Ovary (tissue), 10 donors: ENCODE measurements at regions of chr3 and their contacts with region 1.

Region 1: GRCh38 chr3:194592798-194593752 is 40.1 kb downstream of the TMEM44 start:
- DNase-seq: peak in 1 of 5 donors; percentile 22
- H3K4me3 ChIP-seq: no peak overlapping the region
- H3K27ac ChIP-seq: no peak overlapping the region
- H3K4me1 ChIP-seq: no peaks in the 10 kb centered on the region
- H3K27me3 ChIP-seq: no peaks in the 10 kb centered on the region
- CTCF ChIP-seq: no peak
- EP300 ChIP-seq: no peak
- POLR2A ChIP-seq: no peak

Region 2: GRCh38 chr3:194121891-194122631 is 471.0 kb before region 1 on chr3:
- intact Hi-C with region 1: no loop called
- DNase-seq: no peak
- H3K4me3 ChIP-seq: no peak overlapping the region
- H3K27ac ChIP-seq: no peak overlapping the region
- H3K4me1 ChIP-seq: no peaks in the 10 kb centered on the region
- H3K27me3 ChIP-seq: no peaks in the 10 kb centered on the region
- CTCF ChIP-seq: no peak
- EP300 ChIP-seq: no peak
- POLR2A ChIP-seq: no peak

Region 3: GRCh38 chr3:194235160-194235559 is 357.9 kb before region 1 on chr3:
- intact Hi-C with region 1: no loop called
- DNase-seq: no peak
- H3K4me3 ChIP-seq: no peak overlapping the region
- H3K27ac ChIP-seq: no peak overlapping the region
- H3K4me1 ChIP-seq: no peaks in the 10 kb centered on the region
- H3K27me3 ChIP-seq: no peaks in the 10 kb centered on the region
- CTCF ChIP-seq: no peak
- EP300 ChIP-seq: no peak
- POLR2A ChIP-seq: no peak

Region 4: DNA sequence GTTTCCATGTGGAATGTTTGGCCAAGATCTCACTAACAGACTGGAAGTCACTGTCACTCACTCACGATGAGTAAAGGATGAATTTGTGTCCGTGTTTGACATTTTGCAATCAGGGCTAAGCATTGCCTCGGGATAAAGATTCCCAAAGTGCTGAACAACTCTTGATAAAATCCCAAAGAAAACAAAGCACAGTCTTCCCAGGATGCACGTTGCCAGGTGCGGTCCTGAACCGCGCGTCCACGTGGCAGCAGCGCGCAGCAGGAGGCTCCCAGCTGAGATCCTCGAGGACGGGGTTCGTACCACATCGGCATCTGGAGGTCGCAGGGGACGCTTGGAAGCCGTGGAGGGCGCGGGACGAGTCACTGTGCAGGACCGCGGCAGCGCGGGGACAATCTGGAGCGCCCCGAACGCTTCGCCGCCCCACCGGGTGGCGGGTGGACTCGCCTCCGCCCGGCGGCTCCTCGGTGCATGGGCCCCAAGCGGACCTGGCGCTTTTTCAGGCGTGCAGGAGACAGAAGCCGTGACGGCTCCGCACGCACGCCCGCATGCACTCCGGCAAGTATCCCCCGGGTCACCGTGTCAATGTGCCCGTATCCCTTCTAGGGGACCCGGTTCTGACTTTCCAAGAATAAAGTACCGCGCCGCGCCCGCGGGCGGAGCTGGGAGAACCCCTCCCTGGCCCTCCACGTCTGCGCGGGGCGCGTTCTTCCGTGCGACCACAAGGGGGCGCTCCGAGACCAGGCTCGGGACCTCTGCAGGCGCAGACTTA is 259.7 kb before region 1 on chr3:
- intact Hi-C with region 1: loop called in 2 of 4 experiments (anchors 10 kb)
- DNase-seq: peak; percentile 81 to 93 (median 90)
- H3K4me3 ChIP-seq: peak overlapping the region; percentile 30
- H3K27ac ChIP-seq: no peak overlapping the region
- H3K4me1 ChIP-seq: no peaks in the 10 kb centered on the region
- H3K27me3 ChIP-seq: no peaks in the 10 kb centered on the region
- CTCF ChIP-seq: peak; percentile 94 to 99 (median 96)
- EP300 ChIP-seq: no peak
- POLR2A ChIP-seq: no peak